Naive thymus-derived CD4-positive, alpha-beta T cell (primary cell): ENCODE measurements at regions of chr17 and their contacts with region 1.

Region 1: GRCh38 chr17:1684378-1685189 is at the start of gene PRPF8:
- DNase-seq: peak; percentile 89 to 99 (median 99)
- ATAC-seq: peak; percentile 99
- H3K4me3 ChIP-seq: peak within 1 kb of the TSS; percentile 96
- H3K4me3 Mint-ChIP-seq: peak within 1 kb of the TSS; percentile 89 to 100 (median 97)
- H3K27ac ChIP-seq: peak within 1 kb of the TSS; percentile 100
- H3K27ac Mint-ChIP-seq: peak within 1 kb of the TSS; percentile 95 to 100 (median 98)
- H3K4me1 ChIP-seq: peaks cover 10 to 24% of the 10 kb centered on the region in 2 donors
- H3K4me1 Mint-ChIP-seq: peaks cover 32 to 59% (median 48%) of the 10 kb centered on the region in 7 donors
- H3K27me3 ChIP-seq: no peaks in the 10 kb centered on the region
- H3K27me3 Mint-ChIP-seq: no peaks in the 10 kb centered on the region
- total RNA-seq, gene PRPF8: 388 to 554 (median 460) TPM

Region 2: DNA sequence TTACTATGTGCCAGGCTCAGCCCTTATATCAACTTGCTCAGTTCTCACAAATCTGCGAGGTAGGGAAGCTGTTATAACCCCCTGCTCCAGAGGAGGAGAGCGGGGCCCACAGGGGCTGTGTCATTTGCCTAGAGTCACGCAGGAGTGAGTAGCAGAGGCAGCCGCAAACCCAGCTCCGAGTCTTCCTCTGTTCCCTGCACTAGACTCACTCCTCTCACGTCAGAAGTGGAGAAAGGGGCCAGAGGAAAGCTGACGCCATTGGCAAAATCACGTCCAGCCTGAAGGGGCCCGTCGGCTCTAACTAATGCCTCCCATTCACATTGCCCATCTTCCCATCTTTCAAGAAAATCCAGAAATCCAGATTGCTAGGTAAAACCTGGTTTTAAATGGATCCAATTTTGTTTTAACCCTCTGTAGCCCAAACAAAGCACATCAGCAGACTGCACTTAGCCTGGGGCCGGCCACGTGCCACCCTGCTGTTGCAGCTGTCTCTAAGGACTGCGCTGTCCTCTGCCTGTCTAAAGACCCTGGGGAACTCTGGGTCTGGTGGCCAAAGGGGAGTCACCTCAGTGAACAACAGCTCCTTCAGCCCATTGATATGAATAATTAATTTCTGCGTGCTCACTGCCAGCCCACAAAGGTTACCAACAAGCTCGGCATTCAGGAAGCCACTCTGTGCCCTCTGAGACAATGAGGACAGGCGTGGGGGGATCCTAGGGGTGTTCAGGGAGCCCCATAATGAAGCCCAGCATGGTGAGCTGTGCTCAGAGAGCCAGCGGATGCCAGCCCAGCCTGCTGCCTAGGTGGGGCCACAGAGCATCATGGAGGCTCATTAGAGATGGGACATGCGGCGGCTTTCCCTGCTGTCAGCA is 468.1 kb before region 1 on chr17:
- CTCF ChIA-PET with region 1: no interaction called
- POLR2A ChIA-PET with region 1: no interaction called
- intact Hi-C with region 1: no loop called
- DNase-seq: no peak
- ATAC-seq: no peak
- H3K4me3 ChIP-seq: no peak overlapping the region
- H3K4me3 Mint-ChIP-seq: no peak overlapping the region
- H3K27ac ChIP-seq: no peak overlapping the region
- H3K27ac Mint-ChIP-seq: no peak overlapping the region
- H3K4me1 ChIP-seq: no peaks in the 10 kb centered on the region
- H3K4me1 Mint-ChIP-seq: peaks cover 0 to 3% (median 0%) of the 10 kb centered on the region in 7 donors
- H3K27me3 ChIP-seq: no peaks in the 10 kb centered on the region
- H3K27me3 Mint-ChIP-seq: peaks cover 0 to 13% (median 5%) of the 10 kb centered on the region in 5 donors

Region 3: DNA sequence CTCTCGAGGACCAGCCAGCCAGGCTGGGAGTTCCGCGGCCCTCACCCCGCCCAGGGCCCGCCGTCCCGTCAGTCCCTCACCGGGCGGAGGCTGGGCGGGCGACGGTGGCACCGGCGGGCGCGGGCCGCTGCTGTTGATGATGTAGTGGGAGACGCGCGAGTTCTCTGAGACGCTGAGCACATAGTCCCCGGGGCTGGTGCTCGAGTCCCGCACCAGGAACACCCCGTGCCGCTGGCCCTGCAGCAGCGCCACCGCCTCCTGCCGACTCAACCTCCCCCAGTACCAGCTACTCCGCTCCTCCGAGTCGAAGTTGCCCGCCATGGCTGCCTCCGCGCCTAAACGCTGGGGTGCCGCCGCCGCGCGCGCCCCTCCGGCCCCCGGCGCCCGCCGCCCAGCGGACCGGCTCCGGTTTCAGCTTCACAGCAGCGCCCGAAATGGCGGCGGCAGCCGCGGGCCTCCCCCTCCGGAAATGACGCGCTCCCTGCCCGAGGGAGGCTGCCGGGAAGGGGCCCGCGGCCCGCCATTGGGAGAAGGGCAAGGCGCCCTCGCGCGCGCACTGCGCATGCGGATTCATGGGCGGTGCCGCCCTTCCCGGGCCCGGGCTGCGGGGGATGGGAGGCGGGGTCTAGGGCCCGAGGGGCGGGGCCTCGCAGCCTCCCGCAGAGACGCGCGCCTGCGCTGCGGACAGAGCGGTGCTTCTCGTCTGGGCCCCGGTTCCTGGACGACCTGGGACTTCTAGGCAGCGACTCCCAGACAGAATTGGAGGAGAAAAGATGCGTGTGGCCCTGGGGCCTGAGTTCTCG is 228.6 kb before region 1 on chr17 and contains the start of gene CRK:
- CTCF ChIA-PET with region 1: no interaction called
- POLR2A ChIA-PET with region 1: no interaction called
- intact Hi-C with region 1: loop called (anchors 1 kb)
- DNase-seq: peak; percentile 97 to 100 (median 99)
- ATAC-seq: peak; percentile 97
- H3K4me3 ChIP-seq: peak within 1 kb of the TSS; percentile 94
- H3K4me3 Mint-ChIP-seq: peak within 1 kb of the TSS; percentile 86 to 95 (median 90)
- H3K27ac ChIP-seq: peak within 1 kb of the TSS; percentile 97
- H3K27ac Mint-ChIP-seq: peak within 1 kb of the TSS; percentile 63 to 92 (median 86)
- H3K4me1 ChIP-seq: peaks cover 18 to 37% of the 10 kb centered on the region in 2 donors
- H3K4me1 Mint-ChIP-seq: peaks cover 28 to 64% (median 48%) of the 10 kb centered on the region in 7 donors
- H3K27me3 ChIP-seq: no peaks in the 10 kb centered on the region
- H3K27me3 Mint-ChIP-seq: peaks cover 0 to 23% (median 4%) of the 10 kb centered on the region in 5 donors
- total RNA-seq, gene CRK: 16.9 to 29.0 (median 20.9) TPM

Region 4: DNA sequence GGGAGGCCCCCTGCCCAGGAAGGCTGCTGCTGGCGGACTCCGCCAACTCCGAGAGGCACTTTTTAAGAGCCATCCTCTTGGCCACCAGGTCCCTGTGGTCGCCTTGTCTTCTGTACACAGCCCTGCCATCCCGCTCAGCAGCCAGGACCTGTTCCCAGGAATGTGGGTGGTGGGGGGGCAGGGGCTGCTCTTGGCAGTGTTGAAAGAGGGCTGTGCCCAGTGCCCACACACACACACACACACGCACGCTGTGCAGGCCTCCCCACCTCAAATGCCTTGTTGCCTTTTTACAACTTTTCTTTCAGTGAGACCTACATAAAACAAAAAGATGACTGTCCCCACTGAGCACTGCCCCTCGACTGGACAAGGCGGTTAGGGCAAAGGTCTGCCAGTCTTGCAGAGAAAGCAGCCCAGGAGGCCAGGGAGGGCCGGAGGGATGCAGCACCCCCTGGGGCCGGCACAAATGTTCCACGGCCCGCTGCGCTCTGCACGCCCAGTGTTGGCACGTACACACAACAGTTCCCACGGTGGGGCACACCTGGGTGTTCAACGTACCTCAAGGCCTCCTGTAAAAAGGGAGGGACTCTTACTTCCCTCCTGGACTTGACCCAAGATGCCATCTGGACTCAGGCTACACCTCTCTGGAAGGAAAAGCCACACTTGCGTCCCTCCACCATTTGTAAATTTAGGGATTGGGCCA is 103.5 kb before region 1 on chr17:
- CTCF ChIA-PET with region 1: no interaction called
- POLR2A ChIA-PET with region 1: no interaction called
- intact Hi-C with region 1: no loop called
- DNase-seq: no peak
- ATAC-seq: no peak
- H3K4me3 ChIP-seq: no peak overlapping the region
- H3K4me3 Mint-ChIP-seq: no peak overlapping the region
- H3K27ac ChIP-seq: no peak overlapping the region
- H3K27ac Mint-ChIP-seq: no peak overlapping the region
- H3K4me1 ChIP-seq: no peaks in the 10 kb centered on the region
- H3K4me1 Mint-ChIP-seq: peaks cover 0 to 2% (median 0%) of the 10 kb centered on the region in 7 donors
- H3K27me3 ChIP-seq: no peaks in the 10 kb centered on the region
- H3K27me3 Mint-ChIP-seq: no peaks in the 10 kb centered on the region

Region 5: GRCh38 chr17:1648963-1649843 is 35.4 kb before region 1 on chr17:
- CTCF ChIA-PET with region 1: interaction called, 4 read pairs
- POLR2A ChIA-PET with region 1: interaction called, 13 read pairs
- intact Hi-C with region 1: loop called (anchors 1 kb)
- DNase-seq: peak; percentile 88 to 97 (median 93)
- ATAC-seq: peak; percentile 90
- H3K4me3 ChIP-seq: peak overlapping the region; percentile 64
- H3K4me3 Mint-ChIP-seq: peak overlapping the region; percentile 65 to 81 (median 74)
- H3K27ac ChIP-seq: peak overlapping the region; percentile 69
- H3K27ac Mint-ChIP-seq: peak overlapping the region in 5 of 9 donors; percentile 38 to 58 (median 55)
- H3K4me1 ChIP-seq: peaks cover 15 to 21% of the 10 kb centered on the region in 2 donors
- H3K4me1 Mint-ChIP-seq: peaks cover 0 to 38% (median 10%) of the 10 kb centered on the region in 7 donors
- H3K27me3 ChIP-seq: no peaks in the 10 kb centered on the region
- H3K27me3 Mint-ChIP-seq: no peaks in the 10 kb centered on the region

Region 6: DNA sequence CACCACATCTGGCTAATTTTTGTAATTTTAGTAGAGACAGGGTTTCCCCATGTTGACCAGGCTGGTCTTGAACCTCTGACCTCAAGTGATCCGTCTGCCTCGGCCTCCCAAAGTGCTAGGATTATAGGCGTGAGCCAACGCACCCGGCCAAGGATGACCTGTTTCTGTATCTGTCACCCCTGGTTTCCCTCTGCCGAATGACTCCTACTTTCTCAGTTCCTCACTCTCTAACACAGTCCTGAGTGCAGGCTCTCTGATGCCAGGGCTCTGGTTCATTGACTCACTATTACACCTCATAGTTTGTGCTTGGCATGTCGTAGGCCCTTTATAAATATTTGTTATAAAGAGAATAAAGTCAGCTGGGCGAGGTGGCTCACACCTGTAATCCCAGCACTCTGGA is 10.8 kb after region 1 on chr17:
- CTCF ChIA-PET with region 1: no interaction called
- POLR2A ChIA-PET with region 1: no interaction called
- intact Hi-C with region 1: no loop called
- DNase-seq: no peak
- ATAC-seq: no peak
- H3K4me3 ChIP-seq: no peak overlapping the region
- H3K4me3 Mint-ChIP-seq: no peak overlapping the region
- H3K27ac ChIP-seq: no peak overlapping the region
- H3K27ac Mint-ChIP-seq: no peak overlapping the region
- H3K4me1 ChIP-seq: no peaks in the 10 kb centered on the region
- H3K4me1 Mint-ChIP-seq: no peaks in the 10 kb centered on the region
- H3K27me3 ChIP-seq: no peaks in the 10 kb centered on the region
- H3K27me3 Mint-ChIP-seq: peaks cover 0 to 11% (median 5%) of the 10 kb centered on the region in 5 donors

Region 7: GRCh38 chr17:1829592-1830257 is 145.1 kb after region 1 on chr17 and contains the starts of genes RPA1 and SMYD4:
- CTCF ChIA-PET with region 1: no interaction called
- POLR2A ChIA-PET with region 1: interaction called, 6 read pairs
- intact Hi-C with region 1: loop called in 1 of 2 experiments (anchors 1 kb)
- DNase-seq: peak; percentile 84 to 94 (median 89)
- ATAC-seq: peak; percentile 100
- H3K4me3 ChIP-seq: peak within 1 kb of the TSS; percentile 82
- H3K4me3 Mint-ChIP-seq: peak within 1 kb of the TSS; percentile 89 to 100 (median 98)
- H3K27ac ChIP-seq: peak within 1 kb of the TSS; percentile 86
- H3K27ac Mint-ChIP-seq: peak within 1 kb of the TSS; percentile 89 to 99 (median 95)
- H3K4me1 ChIP-seq: peaks cover 17 to 26% of the 10 kb centered on the region in 2 donors
- H3K4me1 Mint-ChIP-seq: peaks cover 39 to 80% (median 67%) of the 10 kb centered on the region in 7 donors
- H3K27me3 ChIP-seq: no peaks in the 10 kb centered on the region
- H3K27me3 Mint-ChIP-seq: no peaks in the 10 kb centered on the region
- total RNA-seq, gene RPA1: 57.8 to 264 (median 110) TPM
- total RNA-seq, gene SMYD4: 19.8 to 38.4 (median 32.5) TPM